HepG2 (cell line): ENCODE measurements at regions of chr16 and their contacts with region 1.

Region 1: DNA sequence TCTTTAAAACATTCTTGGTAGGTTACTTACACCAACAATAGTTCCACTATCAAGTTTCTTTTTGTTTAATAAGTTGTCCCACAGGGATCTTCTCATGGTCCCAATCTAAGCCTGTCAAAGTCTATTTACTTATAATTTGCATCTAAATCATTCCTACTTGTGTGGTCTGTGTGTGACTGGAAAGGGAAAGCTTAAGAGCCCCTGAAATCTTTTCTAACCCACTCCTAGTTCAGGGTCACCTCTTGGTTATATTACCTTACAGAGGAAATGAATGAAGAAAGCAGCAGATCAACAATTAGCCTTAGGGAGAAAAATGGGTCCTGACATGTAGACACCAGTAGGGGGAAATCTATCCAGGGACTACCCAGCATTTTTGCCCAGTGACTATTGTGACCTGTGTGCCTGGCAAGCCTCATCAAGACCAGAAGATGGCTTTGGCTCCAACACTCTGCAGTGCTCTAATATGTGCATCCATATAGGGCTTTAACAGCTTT is 110.4 kb upstream of the HAS3 start:
- DNase-seq: peak; percentile 78
- ATAC-seq: peak; percentile 85
- H3K4me3 ChIP-seq: no peak overlapping the region
- H3K27ac ChIP-seq: no peak overlapping the region
- H3K4me1 ChIP-seq: peaks cover 60% of the 10 kb centered on the region
- H3K27me3 ChIP-seq: no peaks in the 10 kb centered on the region
- CTCF ChIP-seq: peak; percentile 63
- EP300 ChIP-seq: no peak
- POLR2A ChIP-seq: no peak
- RAD21 ChIP-seq: peak; percentile 72

Region 2: GRCh38 chr16:68396481-68396880 is 598.6 kb before region 1 on chr16:
- CTCF ChIA-PET with region 1: no interaction called
- POLR2A ChIA-PET with region 1: no interaction called
- in situ Hi-C with region 1: no loop called
- intact Hi-C with region 1: no loop called
- DNase-seq: peak; percentile 54
- ATAC-seq: peak; percentile 88
- H3K4me3 ChIP-seq: no peak overlapping the region
- H3K27ac ChIP-seq: no peak overlapping the region
- H3K4me1 ChIP-seq: no peaks in the 10 kb centered on the region
- H3K27me3 ChIP-seq: peaks cover 4 to 21% of the 10 kb centered on the region in 2 experiments
- CTCF ChIP-seq: peak; percentile 60
- EP300 ChIP-seq: no peak
- POLR2A ChIP-seq: no peak
- RAD21 ChIP-seq: peak; percentile 52

Region 3: GRCh38 chr16:68811503-68811902 is 183.6 kb before region 1 on chr16:
- CTCF ChIA-PET with region 1: no interaction called
- POLR2A ChIA-PET with region 1: no interaction called
- in situ Hi-C with region 1: no loop called
- intact Hi-C with region 1: no loop called
- DNase-seq: no peak
- ATAC-seq: no peak; the same call in 2 of the 3 replicates
- H3K4me3 ChIP-seq: no peak overlapping the region
- H3K27ac ChIP-seq: no peak overlapping the region
- H3K4me1 ChIP-seq: peaks cover 5% of the 10 kb centered on the region
- H3K27me3 ChIP-seq: no peaks in the 10 kb centered on the region
- CTCF ChIP-seq: no peak
- EP300 ChIP-seq: no peak
- POLR2A ChIP-seq: no peak
- RAD21 ChIP-seq: no peak

Region 4: GRCh38 chr16:68843482-68844210 is 151.4 kb before region 1 on chr16 and contains the start of gene TANGO6:
- CTCF ChIA-PET with region 1: no interaction called
- POLR2A ChIA-PET with region 1: no interaction called
- in situ Hi-C with region 1: no loop called
- intact Hi-C with region 1: loop called (anchors 10 kb)
- DNase-seq: peak; percentile 85
- ATAC-seq: peak; percentile 97
- H3K4me3 ChIP-seq: peak within 1 kb of the TSS; percentile 75 to 97 (median 91)
- H3K27ac ChIP-seq: peak within 1 kb of the TSS; percentile 87
- H3K4me1 ChIP-seq: peaks cover 27% of the 10 kb centered on the region
- H3K27me3 ChIP-seq: no peaks in the 10 kb centered on the region; a peak in 2 of 5 replicates
- CTCF ChIP-seq: peak; percentile 88
- EP300 ChIP-seq: 0 out of 4 replicates have a peak, but pooled peaks of 1 of the 2 experiments have one; percentile 22
- POLR2A ChIP-seq: peak; percentile 85 to 94
- RAD21 ChIP-seq: peak; percentile 53
- total RNA-seq, gene TANGO6: 13.3 and 15.3 TPM in 2 replicates

Region 5: DNA sequence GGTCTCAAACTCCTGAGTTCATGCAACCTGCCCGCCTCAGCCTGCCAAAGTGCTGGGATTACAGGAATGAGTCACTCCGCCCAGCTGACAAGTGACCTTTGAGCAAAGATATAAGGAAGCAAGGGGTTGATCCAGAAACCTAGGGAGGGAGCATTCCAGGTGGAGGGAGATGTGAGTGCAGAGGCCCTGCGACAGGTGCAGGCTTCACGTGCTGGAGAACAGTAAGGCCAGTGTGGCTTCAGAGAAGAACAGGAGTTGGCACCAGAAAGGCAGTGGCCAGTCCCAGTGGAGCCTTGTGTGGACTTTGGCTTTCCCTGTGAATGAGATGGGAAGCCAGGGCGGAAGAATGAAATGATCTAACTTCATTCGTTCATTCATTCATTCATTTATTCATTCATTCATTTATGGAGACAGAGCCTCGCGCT is 36.8 kb after region 1 on chr16:
- CTCF ChIA-PET with region 1: no interaction called
- POLR2A ChIA-PET with region 1: no interaction called
- in situ Hi-C with region 1: no loop called
- intact Hi-C with region 1: loop called (anchors 5 kb)
- DNase-seq: peak; percentile 92
- ATAC-seq: peak; percentile 91
- H3K4me3 ChIP-seq: no peak overlapping the region
- H3K27ac ChIP-seq: no peak overlapping the region
- H3K4me1 ChIP-seq: peaks cover 14% of the 10 kb centered on the region
- H3K27me3 ChIP-seq: no peaks in the 10 kb centered on the region
- CTCF ChIP-seq: no peak
- EP300 ChIP-seq: peak in 1 of 2 experiments; percentile 52; a peak in 1 of 4 replicates
- POLR2A ChIP-seq: no peak
- RAD21 ChIP-seq: no peak

Region 6: DNA sequence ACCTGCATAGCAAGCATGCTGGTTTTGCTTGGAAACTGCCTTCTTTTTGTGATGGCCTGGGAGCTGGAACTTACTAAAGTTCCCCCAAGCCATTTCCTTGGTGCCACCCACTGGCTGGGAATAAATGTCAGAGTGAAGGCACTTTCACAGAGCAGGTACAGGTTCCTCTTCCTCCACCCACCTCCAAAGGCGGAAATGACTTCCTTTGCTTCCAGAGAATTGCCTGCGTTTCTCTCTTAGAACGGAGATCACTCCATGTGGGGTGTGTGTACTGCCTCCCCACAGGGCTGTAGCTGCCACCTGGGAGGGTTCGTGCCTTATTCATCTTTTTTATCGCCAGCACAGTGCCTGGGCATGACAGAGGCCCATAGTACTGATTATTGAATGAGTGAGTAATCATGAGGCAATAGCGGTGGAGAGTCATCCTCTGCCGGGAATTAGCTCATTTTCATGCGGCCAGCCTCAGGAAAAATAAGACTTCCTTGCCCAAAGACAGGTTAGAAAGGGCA is 78.2 kb after region 1 on chr16:
- CTCF ChIA-PET with region 1: no interaction called
- POLR2A ChIA-PET with region 1: no interaction called
- in situ Hi-C with region 1: no loop called
- intact Hi-C with region 1: loop called (anchors 2 kb)
- DNase-seq: peak; percentile 38
- ATAC-seq: no peak
- H3K4me3 ChIP-seq: no peak overlapping the region
- H3K27ac ChIP-seq: no peak overlapping the region
- H3K4me1 ChIP-seq: peaks cover 41% of the 10 kb centered on the region
- H3K27me3 ChIP-seq: no peaks in the 10 kb centered on the region
- CTCF ChIP-seq: 0 out of 2 replicates have a peak, but pooled peaks have one; percentile 10
- EP300 ChIP-seq: no peak
- POLR2A ChIP-seq: no peak
- RAD21 ChIP-seq: no peak

Region 7: GRCh38 chr16:69123910-69124309 is 128.9 kb after region 1 on chr16:
- CTCF ChIA-PET with region 1: interaction called, 5 read pairs
- POLR2A ChIA-PET with region 1: no interaction called
- in situ Hi-C with region 1: no loop called
- intact Hi-C with region 1: loop called (anchors 2 kb)
- DNase-seq: peak; percentile 85
- ATAC-seq: peak; percentile 62
- H3K4me3 ChIP-seq: no peak overlapping the region
- H3K27ac ChIP-seq: no peak overlapping the region
- H3K4me1 ChIP-seq: peaks cover 13% of the 10 kb centered on the region
- H3K27me3 ChIP-seq: no peaks in the 10 kb centered on the region
- CTCF ChIP-seq: peak; percentile 85
- EP300 ChIP-seq: no peak
- POLR2A ChIP-seq: no peak
- RAD21 ChIP-seq: peak; percentile 82